HEK293 (cell line): ENCODE measurements at regions of chr5 and their contacts with region 1.

Region 1: GRCh38 chr5:109304309-109304708 is 105.5 kb downstream of the PJA2 start:
- H3K4me3 ChIP-seq: no peak overlapping the region
- H3K27ac ChIP-seq: no peak overlapping the region
- H3K4me1 ChIP-seq: peaks cover 4% of the 10 kb centered on the region
- CTCF ChIP-seq: peak; percentile 18; the same call in 1 of the 2 replicates

Region 2: GRCh38 chr5:109340351-109340750 is 36.0 kb after region 1 on chr5:
- CTCF ChIA-PET with region 1: interaction called, 11 read pairs
- POLR2A ChIA-PET with region 1: no interaction called
- H3K4me3 ChIP-seq: no peak overlapping the region
- H3K27ac ChIP-seq: no peak overlapping the region
- H3K4me1 ChIP-seq: no peaks in the 10 kb centered on the region
- CTCF ChIP-seq: no peak

Region 3: DNA sequence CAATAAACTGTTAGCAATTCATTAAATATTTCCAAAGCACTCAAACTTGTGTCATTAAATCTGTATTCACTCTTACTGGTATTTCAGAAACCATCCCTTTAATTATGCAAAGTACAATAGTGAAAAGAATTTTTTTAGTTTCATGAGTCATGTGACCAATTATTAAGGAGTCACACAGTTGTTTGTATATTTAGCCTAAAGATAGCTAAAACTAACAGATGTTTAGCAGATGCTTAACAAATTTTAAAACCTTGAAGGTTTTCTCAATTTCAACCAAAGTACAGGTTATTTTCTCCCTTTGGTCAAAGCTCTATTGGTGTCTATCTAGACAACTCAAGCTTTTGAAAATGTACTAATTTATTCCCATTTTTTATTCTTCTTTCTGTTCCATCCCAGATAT is 61.3 kb after region 1 on chr5:
- CTCF ChIA-PET with region 1: no interaction called
- POLR2A ChIA-PET with region 1: no interaction called
- H3K4me3 ChIP-seq: no peak overlapping the region
- H3K27ac ChIP-seq: no peak overlapping the region
- H3K4me1 ChIP-seq: no peaks in the 10 kb centered on the region
- CTCF ChIP-seq: no peak